Calu3 (cell line): ENCODE measurements at regions of chr1 and their contacts with region 1.

Region 1: GRCh38 chr1:98794196-98794886 is 132.8 kb downstream of the SNX7 start:
- DNase-seq: peak; percentile 41
- H3K4me3 Mint-ChIP-seq: no peak overlapping the region
- H3K27ac Mint-ChIP-seq: no peak overlapping the region
- H3K4me1 Mint-ChIP-seq: no peaks in the 10 kb centered on the region
- H3K27me3 Mint-ChIP-seq: no peaks in the 10 kb centered on the region
- CTCF ChIP-seq: peak; percentile 39

Region 2: GRCh38 chr1:98761219-98761865 is 33.0 kb before region 1 on chr1:
- CTCF ChIA-PET with region 1: no interaction called
- intact Hi-C with region 1: no loop called
- DNase-seq: peak; percentile 3
- H3K4me3 Mint-ChIP-seq: no peak overlapping the region
- H3K27ac Mint-ChIP-seq: no peak overlapping the region
- H3K4me1 Mint-ChIP-seq: no peaks in the 10 kb centered on the region
- H3K27me3 Mint-ChIP-seq: no peaks in the 10 kb centered on the region
- CTCF ChIP-seq: no peak

Region 3: DNA sequence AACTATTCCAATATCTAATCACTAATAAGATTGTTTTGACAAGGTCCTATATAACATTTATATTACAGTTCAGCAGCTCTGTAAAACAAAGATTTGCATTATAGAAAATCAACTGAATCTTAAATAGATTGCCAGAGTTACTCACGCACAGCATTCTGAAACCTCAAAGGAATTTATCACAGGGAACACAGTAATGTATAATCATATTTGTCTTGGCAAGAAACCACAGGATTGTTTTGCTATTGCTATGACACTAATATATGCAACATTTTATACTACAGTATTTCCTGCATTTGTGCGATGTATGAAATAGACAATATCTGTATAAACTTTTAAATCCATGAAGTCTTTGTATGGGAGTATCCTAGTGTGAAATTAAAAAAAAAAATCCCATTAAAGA is 108.9 kb after region 1 on chr1:
- CTCF ChIA-PET with region 1: no interaction called
- intact Hi-C with region 1: loop called (anchors 5 kb)
- DNase-seq: no peak
- H3K4me3 Mint-ChIP-seq: no peak overlapping the region
- H3K27ac Mint-ChIP-seq: peak overlapping the region; percentile 60
- H3K4me1 Mint-ChIP-seq: peaks cover 9% of the 10 kb centered on the region
- H3K27me3 Mint-ChIP-seq: no peaks in the 10 kb centered on the region
- CTCF ChIP-seq: no peak

Region 4: DNA sequence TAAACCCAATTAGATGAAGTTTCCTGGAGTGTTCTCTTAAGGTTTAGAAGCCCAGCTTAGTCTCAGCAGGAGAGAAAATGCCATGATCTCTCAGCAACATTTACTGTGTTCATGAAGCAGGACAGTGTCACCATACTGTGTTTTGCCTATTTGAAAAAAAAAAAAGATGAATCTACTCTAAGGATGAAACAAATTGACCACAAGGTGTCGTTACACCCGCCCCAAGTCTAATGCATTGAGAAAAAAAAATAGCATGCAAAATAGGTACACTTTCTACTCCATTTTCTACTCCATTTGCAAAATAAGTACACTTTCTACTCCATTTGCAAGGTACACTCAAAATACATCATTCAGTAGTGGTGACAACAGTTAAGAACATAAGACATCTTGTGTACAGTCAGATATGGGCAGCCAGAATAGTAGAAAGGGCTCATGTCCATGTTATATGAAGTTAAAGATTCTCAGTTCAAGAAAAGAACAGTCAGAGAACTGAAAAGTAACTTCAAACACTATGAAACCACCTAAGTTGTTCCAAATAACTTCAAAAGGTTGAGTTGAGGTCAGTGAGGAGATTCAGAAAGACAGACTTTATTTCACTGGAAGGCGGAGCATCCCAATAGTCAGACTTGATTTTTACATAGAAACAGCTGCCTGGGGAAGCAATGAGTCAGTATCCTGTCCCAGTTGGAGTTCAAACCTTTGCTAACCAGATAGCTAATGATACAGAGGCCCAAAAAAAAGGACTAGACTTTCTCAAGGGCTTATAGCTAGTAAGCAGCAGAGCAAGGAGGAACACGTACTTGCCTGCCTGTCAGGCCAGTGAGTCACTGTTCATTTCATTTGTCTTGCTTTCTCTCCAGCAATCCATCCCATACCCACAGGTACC is 197.0 kb after region 1 on chr1:
- CTCF ChIA-PET with region 1: no interaction called
- intact Hi-C with region 1: loop called (anchors 10 kb)
- DNase-seq: peak; percentile 16
- H3K4me3 Mint-ChIP-seq: no peak overlapping the region
- H3K27ac Mint-ChIP-seq: no peak overlapping the region
- H3K4me1 Mint-ChIP-seq: no peaks in the 10 kb centered on the region
- H3K27me3 Mint-ChIP-seq: no peaks in the 10 kb centered on the region
- CTCF ChIP-seq: no peak

Region 5: GRCh38 chr1:99004254-99004859 is 210.0 kb after region 1 on chr1:
- CTCF ChIA-PET with region 1: no interaction called
- intact Hi-C with region 1: no loop called
- DNase-seq: peak; percentile 15
- H3K4me3 Mint-ChIP-seq: peak overlapping the region; percentile 26
- H3K27ac Mint-ChIP-seq: no peak overlapping the region
- H3K4me1 Mint-ChIP-seq: no peaks in the 10 kb centered on the region
- H3K27me3 Mint-ChIP-seq: peaks cover 10% of the 10 kb centered on the region
- CTCF ChIP-seq: no peak

Region 6: GRCh38 chr1:99170516-99170915 is 376.2 kb after region 1 on chr1:
- CTCF ChIA-PET with region 1: no interaction called
- intact Hi-C with region 1: loop called (anchors 5 kb)
- DNase-seq: no peak
- H3K4me3 Mint-ChIP-seq: peak overlapping the region; percentile 50
- H3K27ac Mint-ChIP-seq: peak overlapping the region; percentile 27
- H3K4me1 Mint-ChIP-seq: peaks cover 44% of the 10 kb centered on the region
- H3K27me3 Mint-ChIP-seq: no peaks in the 10 kb centered on the region
- CTCF ChIP-seq: no peak

Region 7: DNA sequence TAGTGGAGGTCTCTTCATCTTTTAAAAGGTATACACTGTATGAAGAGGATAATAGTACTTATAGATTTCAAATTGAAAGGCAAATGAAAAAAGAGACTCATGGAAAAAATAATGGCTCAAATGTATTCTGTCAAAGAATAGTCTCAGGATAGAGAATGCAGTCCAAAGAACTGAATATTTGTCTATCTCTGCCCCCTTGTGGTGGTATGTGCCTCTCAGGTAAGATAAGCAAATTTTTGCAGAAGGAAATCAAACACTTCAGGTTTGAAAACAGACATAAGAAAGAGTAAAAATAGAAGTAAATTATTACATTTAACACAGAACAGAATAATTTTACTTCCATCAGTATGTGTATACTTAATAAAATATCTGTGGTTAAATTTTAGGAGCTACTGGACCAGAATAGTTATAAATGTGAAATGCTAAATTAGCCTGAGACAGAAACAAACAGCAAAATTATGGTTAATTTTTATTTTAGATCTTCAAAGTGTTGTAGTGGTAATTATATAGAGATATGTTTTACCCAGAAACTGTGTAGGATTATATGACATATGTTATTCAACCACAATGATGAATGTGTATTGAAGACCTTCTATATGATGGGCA is 687.2 kb after region 1 on chr1:
- CTCF ChIA-PET with region 1: no interaction called
- intact Hi-C with region 1: loop called (anchors 10 kb)
- DNase-seq: peak; percentile 47
- H3K4me3 Mint-ChIP-seq: no peak overlapping the region
- H3K27ac Mint-ChIP-seq: no peak overlapping the region
- H3K4me1 Mint-ChIP-seq: no peaks in the 10 kb centered on the region
- H3K27me3 Mint-ChIP-seq: no peaks in the 10 kb centered on the region
- CTCF ChIP-seq: peak; percentile 34

Region 8: DNA sequence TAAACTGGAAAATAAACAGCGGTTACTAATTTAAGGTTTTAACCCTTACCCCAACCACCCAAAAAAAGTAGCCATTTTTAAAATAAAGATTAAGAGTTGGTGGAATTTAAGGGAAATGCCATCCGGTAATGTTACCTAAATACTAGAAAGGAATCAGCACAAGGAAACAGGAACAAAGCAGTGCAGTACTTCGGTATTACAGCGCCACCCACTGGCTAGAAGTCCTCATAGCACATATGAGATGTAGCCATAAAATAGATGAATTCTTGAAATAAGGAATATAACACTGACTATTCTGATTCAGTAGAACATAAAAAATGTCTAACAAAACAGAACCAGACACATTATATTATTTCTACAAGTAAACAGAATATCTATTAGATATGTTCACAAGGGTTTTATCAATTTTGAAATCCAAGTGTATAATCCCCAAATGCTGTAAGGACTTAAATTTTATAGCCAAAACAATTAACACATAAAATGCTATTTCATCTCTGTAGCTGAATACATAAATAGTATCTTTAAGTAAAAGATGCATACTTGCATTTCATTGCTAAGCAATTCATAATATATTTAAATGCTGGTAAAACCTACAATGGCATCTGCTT is 913.3 kb after region 1 on chr1:
- CTCF ChIA-PET with region 1: no interaction called
- intact Hi-C with region 1: loop called (anchors 1 kb)
- DNase-seq: peak; percentile 60
- H3K4me3 Mint-ChIP-seq: no peak overlapping the region
- H3K27ac Mint-ChIP-seq: no peak overlapping the region
- H3K4me1 Mint-ChIP-seq: no peaks in the 10 kb centered on the region
- H3K27me3 Mint-ChIP-seq: no peaks in the 10 kb centered on the region
- CTCF ChIP-seq: peak; percentile 37